ENCODE measurements at regions of chr1 and their contacts with region 1.

Region 1: GRCh38 chr1:152459596-152460528 is 45.8 kb upstream of the CRNN start:
- DNase-seq: peak; percentile 85
- H3K4me3 Mint-ChIP-seq: no peak overlapping the region
- H3K27ac Mint-ChIP-seq: no peak overlapping the region
- H3K4me1 Mint-ChIP-seq: no peaks in the 10 kb centered on the region
- H3K27me3 Mint-ChIP-seq: peaks cover 43% of the 10 kb centered on the region
- CTCF ChIP-seq: peak; percentile 85

Region 2: GRCh38 chr1:152047730-152048402 is 412.0 kb before region 1 on chr1:
- CTCF ChIA-PET with region 1: interaction called, 6 read pairs
- intact Hi-C with region 1: loop called (anchors 2 kb)
- DNase-seq: peak; percentile 96
- H3K4me3 Mint-ChIP-seq: peak overlapping the region; percentile 48
- H3K27ac Mint-ChIP-seq: peak overlapping the region; percentile 84
- H3K4me1 Mint-ChIP-seq: peaks cover 41% of the 10 kb centered on the region
- H3K27me3 Mint-ChIP-seq: peaks cover 4% of the 10 kb centered on the region
- CTCF ChIP-seq: no peak

Region 3: DNA sequence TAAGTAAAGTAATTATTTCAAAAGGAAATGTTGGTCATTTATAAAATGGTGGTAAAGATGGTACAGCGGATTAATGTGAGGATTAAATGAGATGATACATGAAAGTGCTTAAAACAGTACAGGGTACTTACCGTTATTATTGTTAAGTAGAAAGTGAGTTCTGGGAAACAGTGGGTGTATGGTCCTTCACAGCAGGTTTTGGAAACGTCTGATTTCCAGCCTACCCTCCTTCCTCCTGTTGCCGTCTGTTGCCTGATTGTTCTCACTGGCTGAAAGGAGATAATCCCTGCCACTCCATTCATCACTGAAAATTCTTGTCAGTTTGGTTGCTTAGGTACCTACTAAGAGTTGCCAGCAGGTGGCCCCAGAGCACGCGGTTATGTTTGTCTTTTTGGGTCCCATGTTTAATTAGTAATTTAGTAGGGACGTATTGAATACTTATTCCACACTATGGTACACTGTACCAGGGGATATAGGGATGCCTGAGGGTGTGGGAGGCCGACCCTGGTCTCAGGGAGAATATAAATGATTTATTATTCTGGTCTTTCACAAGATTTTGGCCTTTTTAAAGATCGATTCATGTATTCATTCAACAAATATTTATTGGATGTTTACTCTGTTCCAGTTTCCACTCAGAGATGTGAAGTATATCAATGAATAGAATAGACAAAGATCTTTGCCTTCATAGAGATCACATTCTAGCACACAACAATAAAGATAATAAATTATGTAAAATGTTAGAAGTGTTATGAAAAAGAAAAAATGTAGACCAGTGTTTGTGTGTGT is 270.0 kb before region 1 on chr1:
- CTCF ChIA-PET with region 1: interaction called, 47 read pairs
- intact Hi-C with region 1: loop called (anchors 1 kb)
- DNase-seq: peak; percentile 77
- H3K4me3 Mint-ChIP-seq: peak overlapping the region; percentile 71
- H3K27ac Mint-ChIP-seq: no peak overlapping the region
- H3K4me1 Mint-ChIP-seq: peaks cover 27% of the 10 kb centered on the region
- H3K27me3 Mint-ChIP-seq: peaks cover 61% of the 10 kb centered on the region
- CTCF ChIP-seq: peak; percentile 71

Region 4: GRCh38 chr1:152398812-152399698 is 60.8 kb before region 1 on chr1:
- CTCF ChIA-PET with region 1: interaction called, 63 read pairs
- intact Hi-C with region 1: loop called (anchors 1 kb)
- DNase-seq: peak; percentile 58
- H3K4me3 Mint-ChIP-seq: no peak overlapping the region
- H3K27ac Mint-ChIP-seq: no peak overlapping the region
- H3K4me1 Mint-ChIP-seq: no peaks in the 10 kb centered on the region
- H3K27me3 Mint-ChIP-seq: peaks cover 79% of the 10 kb centered on the region
- CTCF ChIP-seq: peak; percentile 65

Region 5: GRCh38 chr1:152448095-152448494 is 11.8 kb before region 1 on chr1:
- CTCF ChIA-PET with region 1: interaction called, 15 read pairs
- intact Hi-C with region 1: no loop called
- DNase-seq: no peak
- H3K4me3 Mint-ChIP-seq: no peak overlapping the region
- H3K27ac Mint-ChIP-seq: no peak overlapping the region
- H3K4me1 Mint-ChIP-seq: no peaks in the 10 kb centered on the region
- H3K27me3 Mint-ChIP-seq: peaks cover 35% of the 10 kb centered on the region
- CTCF ChIP-seq: no peak

Measured in Calu3 (cell line).